ENCODE measurements at regions of chr11 and their contacts with region 1.

Region 1: DNA sequence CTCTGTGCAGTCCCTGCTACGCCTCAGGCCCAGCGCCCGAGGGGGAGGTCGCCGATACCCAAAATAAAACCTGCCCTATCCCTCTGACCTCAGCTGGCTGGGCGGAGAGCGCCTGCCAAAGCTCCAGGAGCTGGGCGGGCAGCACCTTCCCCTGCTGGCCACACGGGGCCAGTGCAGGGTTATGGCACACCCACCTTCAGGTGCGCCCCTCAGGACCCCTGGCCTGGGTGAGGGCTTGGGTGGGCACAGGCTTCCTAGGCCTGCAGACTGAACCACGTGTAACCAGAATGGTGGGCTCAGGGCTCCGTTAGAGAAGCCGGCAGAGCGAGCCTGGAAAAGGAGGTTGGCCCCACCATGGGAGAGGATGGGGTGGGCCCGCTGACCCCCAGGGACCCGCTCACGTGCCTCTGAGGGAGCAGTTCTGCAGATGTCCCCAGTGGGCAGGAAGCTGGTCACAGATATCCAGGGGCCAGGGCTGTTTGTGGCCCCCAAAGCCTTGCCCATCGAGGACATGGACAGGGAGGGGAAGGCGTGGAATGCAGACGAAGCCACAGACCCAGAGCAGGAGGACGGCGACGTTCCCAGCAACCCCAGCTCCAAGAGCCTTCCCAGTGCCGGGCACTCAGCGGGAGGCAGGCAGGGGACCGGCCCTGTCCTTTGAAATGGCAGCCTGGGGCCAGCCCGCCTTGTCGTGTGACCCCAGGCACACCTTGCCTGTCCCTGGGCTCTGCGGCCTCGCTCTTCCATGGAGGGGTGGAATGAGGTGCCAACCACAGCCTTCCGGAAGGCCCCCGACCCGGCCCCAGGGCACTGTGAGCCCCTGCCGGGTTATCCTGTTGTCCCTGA is 1.6 kb upstream of the TNNT3 start:
- DNase-seq: peak in 5 of 14 experiments; percentile 12 to 48 (median 32)
- ATAC-seq: peak; percentile 54
- H3K4me3 ChIP-seq: no peak overlapping the region
- H3K4me3 Mint-ChIP-seq: no peak overlapping the region
- H3K27ac ChIP-seq: no peak overlapping the region
- H3K27ac Mint-ChIP-seq: no peak overlapping the region
- H3K4me1 ChIP-seq: peaks cover 29% of the 10 kb centered on the region
- H3K4me1 Mint-ChIP-seq: peaks cover 11% of the 10 kb centered on the region
- H3K27me3 ChIP-seq: no peaks in the 10 kb centered on the region
- H3K27me3 Mint-ChIP-seq: peaks cover 12% of the 10 kb centered on the region
- CTCF ChIP-seq: no peak

Region 2: GRCh38 chr11:1837171-1838076 is 80.5 kb before region 1 on chr11:
- CTCF ChIA-PET with region 1: no interaction called
- POLR2A ChIA-PET with region 1: no interaction called
- intact Hi-C with region 1: loop called in 1 of 2 experiments (anchors 2 kb)
- DNase-seq: peak; percentile 71 to 90 (median 78)
- ATAC-seq: peak; percentile 94
- H3K4me3 ChIP-seq: no peak overlapping the region
- H3K4me3 Mint-ChIP-seq: no peak overlapping the region
- H3K27ac ChIP-seq: no peak overlapping the region
- H3K27ac Mint-ChIP-seq: no peak overlapping the region
- H3K4me1 ChIP-seq: peaks cover 31% of the 10 kb centered on the region
- H3K4me1 Mint-ChIP-seq: peaks cover 10% of the 10 kb centered on the region
- H3K27me3 ChIP-seq: peaks cover 2 to 8% of the 10 kb centered on the region in 2 experiments
- H3K27me3 Mint-ChIP-seq: no peaks in the 10 kb centered on the region
- CTCF ChIP-seq: peak; percentile 95

Region 3: GRCh38 chr11:1889224-1890120 is 28.4 kb before region 1 on chr11:
- CTCF ChIA-PET with region 1: no interaction called
- POLR2A ChIA-PET with region 1: interaction called, 40 read pairs
- intact Hi-C with region 1: loop called in 1 of 2 experiments (anchors 1 kb)
- DNase-seq: peak; percentile 58 to 92 (median 77)
- ATAC-seq: peak; percentile 95
- H3K4me3 ChIP-seq: peak overlapping the region; percentile 47
- H3K4me3 Mint-ChIP-seq: peak overlapping the region; percentile 82
- H3K27ac ChIP-seq: peak overlapping the region; percentile 62 to 73
- H3K27ac Mint-ChIP-seq: peak overlapping the region; percentile 85
- H3K4me1 ChIP-seq: peaks cover 53% of the 10 kb centered on the region
- H3K4me1 Mint-ChIP-seq: peaks cover 31% of the 10 kb centered on the region
- H3K27me3 ChIP-seq: no peaks in the 10 kb centered on the region
- H3K27me3 Mint-ChIP-seq: no peaks in the 10 kb centered on the region
- CTCF ChIP-seq: no peak

Region 4: DNA sequence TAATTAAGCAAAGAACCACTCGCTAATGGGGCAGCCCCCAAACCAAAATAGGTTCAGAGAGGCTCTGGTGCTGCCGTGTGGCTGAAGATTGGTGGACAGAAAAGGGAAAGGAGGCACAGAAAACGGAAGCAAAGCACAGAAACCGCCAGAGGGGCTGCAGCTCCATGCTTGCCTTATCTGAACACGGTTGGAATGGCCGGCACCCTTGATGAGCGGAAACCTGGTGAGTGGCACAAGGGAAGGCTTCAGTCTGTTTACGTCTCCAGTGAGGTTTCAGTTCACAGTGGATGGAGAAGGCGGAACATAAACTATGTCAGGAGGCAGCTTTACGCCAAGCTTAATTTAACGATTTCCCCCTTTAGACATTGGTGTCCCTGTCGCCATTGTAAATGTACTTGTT is 21.0 kb before region 1 on chr11:
- CTCF ChIA-PET with region 1: no interaction called
- POLR2A ChIA-PET with region 1: interaction called, 40 read pairs
- intact Hi-C with region 1: loop called in 1 of 2 experiments (anchors 1 kb)
- DNase-seq: no peak
- ATAC-seq: no peak
- H3K4me3 ChIP-seq: no peak overlapping the region
- H3K4me3 Mint-ChIP-seq: no peak overlapping the region
- H3K27ac ChIP-seq: no peak overlapping the region
- H3K27ac Mint-ChIP-seq: no peak overlapping the region
- H3K4me1 ChIP-seq: peaks cover 7% of the 10 kb centered on the region
- H3K4me1 Mint-ChIP-seq: peaks cover 11% of the 10 kb centered on the region
- H3K27me3 ChIP-seq: peaks cover 0 to 3% of the 10 kb centered on the region in 2 experiments
- H3K27me3 Mint-ChIP-seq: peaks cover 7% of the 10 kb centered on the region
- CTCF ChIP-seq: no peak

Region 5: DNA sequence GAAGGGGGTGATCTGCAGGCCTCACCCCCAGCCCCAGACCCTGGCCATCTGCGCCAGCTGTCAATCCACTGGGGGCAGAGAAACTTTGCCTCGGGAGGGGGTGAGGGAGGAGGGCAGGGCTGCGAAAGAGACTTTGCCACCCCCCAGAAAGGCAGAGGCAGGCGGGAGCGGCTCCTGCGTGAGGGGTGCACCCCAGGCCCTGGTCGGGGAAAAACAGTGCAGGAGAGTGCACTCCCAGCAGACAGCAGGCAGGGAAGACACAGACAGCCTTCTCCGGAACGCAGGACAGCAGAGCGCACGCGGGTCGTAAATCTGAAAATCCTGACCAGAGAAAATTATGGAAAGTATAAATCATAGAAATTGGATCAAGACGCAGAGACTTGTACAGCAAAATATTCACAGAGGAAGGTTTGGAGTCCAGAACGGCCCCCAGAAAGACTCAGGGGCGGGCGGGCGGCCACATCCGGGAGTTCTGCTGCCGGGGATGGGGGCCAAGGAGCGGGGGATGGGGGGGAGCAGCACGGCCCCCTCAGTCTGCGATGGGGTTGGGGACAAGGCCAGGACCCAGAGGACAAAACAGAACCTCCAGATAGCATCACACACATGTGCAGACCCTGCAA is 21.2 kb after region 1 on chr11:
- CTCF ChIA-PET with region 1: no interaction called
- POLR2A ChIA-PET with region 1: no interaction called
- intact Hi-C with region 1: loop called in 1 of 2 experiments (anchors 1 kb)
- DNase-seq: peak in 1 of 14 experiments; percentile 1
- ATAC-seq: no peak
- H3K4me3 ChIP-seq: no peak overlapping the region
- H3K4me3 Mint-ChIP-seq: no peak overlapping the region
- H3K27ac ChIP-seq: no peak overlapping the region
- H3K27ac Mint-ChIP-seq: no peak overlapping the region
- H3K4me1 ChIP-seq: peaks cover 3% of the 10 kb centered on the region
- H3K4me1 Mint-ChIP-seq: no peaks in the 10 kb centered on the region
- H3K27me3 ChIP-seq: no peaks in the 10 kb centered on the region
- H3K27me3 Mint-ChIP-seq: peaks cover 4% of the 10 kb centered on the region
- CTCF ChIP-seq: no peak

Region 6: DNA sequence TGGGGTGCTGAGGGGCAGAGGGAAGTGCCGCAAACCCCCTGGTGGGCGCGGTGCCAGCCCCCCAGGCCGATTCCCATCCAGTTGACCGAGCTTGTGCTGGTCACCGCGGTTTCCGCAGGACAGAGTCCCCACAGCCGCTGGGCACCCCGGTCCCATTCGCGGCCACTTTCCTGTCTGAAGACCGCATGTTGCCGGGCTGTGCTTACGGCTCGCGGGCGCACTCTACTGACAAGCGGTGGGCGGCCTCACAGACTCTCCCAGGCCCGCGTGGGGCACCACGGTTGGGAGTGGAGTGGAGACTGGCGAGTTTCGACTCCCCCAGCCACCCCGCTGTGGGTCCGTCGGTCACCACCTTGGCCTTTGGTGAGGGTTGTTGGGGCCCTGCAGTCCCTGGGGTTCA is 80.4 kb after region 1 on chr11:
- CTCF ChIA-PET with region 1: no interaction called
- POLR2A ChIA-PET with region 1: no interaction called
- intact Hi-C with region 1: no loop called
- DNase-seq: no peak
- ATAC-seq: no peak
- H3K4me3 ChIP-seq: no peak overlapping the region
- H3K4me3 Mint-ChIP-seq: no peak overlapping the region
- H3K27ac ChIP-seq: no peak overlapping the region
- H3K27ac Mint-ChIP-seq: no peak overlapping the region
- H3K4me1 ChIP-seq: no peaks in the 10 kb centered on the region
- H3K4me1 Mint-ChIP-seq: no peaks in the 10 kb centered on the region
- H3K27me3 ChIP-seq: no peaks in the 10 kb centered on the region
- H3K27me3 Mint-ChIP-seq: no peaks in the 10 kb centered on the region
- CTCF ChIP-seq: no peak

Measured in CD4-positive, alpha-beta T cell (primary cell).